CD8-positive, alpha-beta T cell (primary cell): ENCODE measurements at regions of chr1 and their contacts with region 1.

Region 1: DNA sequence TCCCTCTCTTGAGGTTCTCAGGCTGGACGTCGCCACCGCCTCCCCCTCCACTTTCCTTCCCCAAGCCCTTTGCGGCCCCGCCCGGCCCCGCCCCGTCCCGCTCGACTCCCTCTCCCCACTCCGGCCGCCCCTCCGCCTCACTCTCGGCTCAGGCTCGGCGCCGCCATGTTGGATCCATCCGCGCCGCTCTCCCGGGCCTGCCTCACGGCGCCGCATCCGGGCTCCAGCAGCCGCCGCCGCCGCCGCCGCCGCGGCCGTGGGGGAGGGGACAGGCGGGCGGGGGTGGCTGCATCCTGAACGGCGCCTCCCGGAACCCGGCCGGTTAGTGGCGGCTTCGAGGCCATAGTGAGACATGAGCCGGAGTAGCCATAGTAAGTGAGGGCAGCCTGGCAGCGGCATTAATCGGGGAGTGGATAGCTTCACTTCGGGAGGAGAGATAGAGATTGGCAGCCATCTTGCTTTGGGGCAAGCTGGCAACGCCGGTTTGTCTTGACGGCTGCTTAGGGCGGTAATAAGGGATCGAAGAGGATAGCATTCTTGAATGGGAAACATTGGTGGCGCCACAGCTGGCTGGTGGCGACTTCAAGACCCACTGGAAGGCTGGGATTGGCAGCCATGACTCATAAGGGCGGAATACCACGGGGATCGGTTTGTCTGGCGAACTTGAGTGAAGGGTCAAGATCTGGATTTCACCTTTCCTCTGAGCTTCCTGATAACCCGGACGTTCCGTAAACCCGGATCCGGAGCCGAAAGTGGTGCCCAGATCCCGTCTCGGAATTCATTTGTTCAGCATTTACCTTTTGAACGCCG is at the start of gene DEDD:
- DNase-seq: peak; percentile 75 to 97 (median 86)
- ATAC-seq: peak; percentile 93
- H3K4me3 ChIP-seq: peak within 1 kb of the TSS; percentile 66 to 97
- H3K4me3 Mint-ChIP-seq: no peak within 1 kb of the TSS
- H3K27ac ChIP-seq: peak within 1 kb of the TSS; percentile 80 to 87
- H3K27ac Mint-ChIP-seq: no peak within 1 kb of the TSS
- H3K4me1 ChIP-seq: peaks cover 52% of the 10 kb centered on the region
- H3K4me1 Mint-ChIP-seq: peaks cover 49% of the 10 kb centered on the region
- H3K27me3 ChIP-seq: no peaks in the 10 kb centered on the region
- H3K27me3 Mint-ChIP-seq: no peaks in the 10 kb centered on the region
- CTCF ChIP-seq: no peak
- total RNA-seq, gene DEDD: 32.4 to 34.6 TPM

Region 2: GRCh38 chr1:160342953-160343869 is 789.4 kb before region 1 on chr1 and contains the starts of genes COPA and NCSTN:
- CTCF ChIA-PET with region 1: no interaction called
- POLR2A ChIA-PET with region 1: no interaction called
- intact Hi-C with region 1: loop called in 1 of 2 experiments (anchors 5 kb)
- DNase-seq: peak; percentile 82 to 97 (median 89)
- ATAC-seq: peak; percentile 98
- H3K4me3 ChIP-seq: peak within 1 kb of the TSS; percentile 78 to 98
- H3K4me3 Mint-ChIP-seq: peak within 1 kb of the TSS; percentile 100
- H3K27ac ChIP-seq: peak within 1 kb of the TSS; percentile 88 to 97
- H3K27ac Mint-ChIP-seq: peak within 1 kb of the TSS; percentile 100
- H3K4me1 ChIP-seq: peaks cover 12% of the 10 kb centered on the region
- H3K4me1 Mint-ChIP-seq: peaks cover 72% of the 10 kb centered on the region
- H3K27me3 ChIP-seq: no peaks in the 10 kb centered on the region
- H3K27me3 Mint-ChIP-seq: no peaks in the 10 kb centered on the region
- CTCF ChIP-seq: no peak
- total RNA-seq, gene COPA: 116 to 126 TPM
- total RNA-seq, gene NCSTN: 55.6 to 58.4 TPM

Region 3: GRCh38 chr1:161071886-161072371 is 60.7 kb before region 1 on chr1:
- CTCF ChIA-PET with region 1: interaction called, 5 read pairs
- POLR2A ChIA-PET with region 1: interaction called, 6 read pairs
- intact Hi-C with region 1: loop called (anchors 2 to 5 kb)
- DNase-seq: peak; percentile 19 to 75 (median 54)
- ATAC-seq: no peak
- H3K4me3 ChIP-seq: no peak overlapping the region
- H3K4me3 Mint-ChIP-seq: no peak overlapping the region
- H3K27ac ChIP-seq: no peak overlapping the region
- H3K27ac Mint-ChIP-seq: peak overlapping the region; percentile 83
- H3K4me1 ChIP-seq: peaks cover 31% of the 10 kb centered on the region
- H3K4me1 Mint-ChIP-seq: peaks cover 40% of the 10 kb centered on the region
- H3K27me3 ChIP-seq: no peaks in the 10 kb centered on the region
- H3K27me3 Mint-ChIP-seq: no peaks in the 10 kb centered on the region
- CTCF ChIP-seq: peak; percentile 70

Region 4: DNA sequence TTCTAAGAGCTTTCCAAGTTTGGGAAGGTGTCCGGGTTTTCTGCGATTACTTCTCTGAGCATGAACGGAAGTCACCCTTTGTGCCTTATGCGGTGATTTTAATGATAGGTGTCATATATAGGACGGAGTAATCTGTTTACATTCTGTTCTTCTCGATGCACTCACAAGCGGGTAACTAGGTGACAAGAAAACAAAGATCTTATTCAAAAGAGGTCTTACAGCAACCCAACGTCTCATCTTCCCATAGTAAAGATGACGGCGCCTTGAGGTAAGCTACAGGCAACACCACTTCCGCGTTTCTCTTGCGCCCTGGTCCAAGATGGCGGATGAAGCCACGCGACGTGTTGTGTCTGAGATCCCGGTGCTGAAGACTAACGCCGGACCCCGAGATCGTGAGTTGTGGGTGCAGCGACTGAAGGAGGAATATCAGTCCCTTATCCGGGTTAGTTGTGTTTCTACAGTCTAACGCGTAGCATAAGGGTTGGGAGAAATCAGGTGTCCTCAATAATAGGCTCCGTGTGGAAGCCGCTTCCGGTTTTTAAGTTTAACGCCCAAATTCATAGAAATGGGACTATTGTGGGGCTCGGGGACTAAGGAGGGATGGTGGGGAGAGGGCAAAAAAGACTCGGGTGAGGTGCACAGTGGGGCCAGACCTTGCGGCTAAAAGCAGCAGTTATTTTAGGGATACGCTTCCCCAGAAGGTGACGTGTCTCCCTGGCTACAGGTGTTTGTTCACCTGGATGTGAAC is 21.2 kb after region 1 on chr1 and contains the start of gene UFC1:
- CTCF ChIA-PET with region 1: interaction called, 8 read pairs
- POLR2A ChIA-PET with region 1: interaction called, 20 read pairs
- intact Hi-C with region 1: loop called (anchors 1 kb)
- DNase-seq: peak; percentile 66 to 96 (median 78)
- ATAC-seq: peak; percentile 92
- H3K4me3 ChIP-seq: peak within 1 kb of the TSS; percentile 95 to 98
- H3K4me3 Mint-ChIP-seq: peak within 1 kb of the TSS; percentile 96
- H3K27ac ChIP-seq: peak within 1 kb of the TSS; percentile 98 to 99
- H3K27ac Mint-ChIP-seq: peak within 1 kb of the TSS; percentile 100
- H3K4me1 ChIP-seq: peaks cover 17% of the 10 kb centered on the region
- H3K4me1 Mint-ChIP-seq: peaks cover 30% of the 10 kb centered on the region
- H3K27me3 ChIP-seq: no peaks in the 10 kb centered on the region
- H3K27me3 Mint-ChIP-seq: no peaks in the 10 kb centered on the region
- CTCF ChIP-seq: no peak
- total RNA-seq, gene UFC1: 94.7 to 96.6 TPM

Region 5: GRCh38 chr1:161165742-161166668 is 33.4 kb after region 1 on chr1 and contains the start of gene PPOX:
- CTCF ChIA-PET with region 1: interaction called, 3 read pairs
- POLR2A ChIA-PET with region 1: interaction called, 10 read pairs
- intact Hi-C with region 1: loop called (anchors 1 kb)
- DNase-seq: peak; percentile 81 to 97 (median 92)
- ATAC-seq: peak; percentile 91
- H3K4me3 ChIP-seq: peak within 1 kb of the TSS; percentile 58 to 79
- H3K4me3 Mint-ChIP-seq: peak within 1 kb of the TSS; percentile 88
- H3K27ac ChIP-seq: peak within 1 kb of the TSS; percentile 88 to 91
- H3K27ac Mint-ChIP-seq: peak within 1 kb of the TSS; percentile 98
- H3K4me1 ChIP-seq: peaks cover 29% of the 10 kb centered on the region
- H3K4me1 Mint-ChIP-seq: peaks cover 56% of the 10 kb centered on the region
- H3K27me3 ChIP-seq: no peaks in the 10 kb centered on the region
- H3K27me3 Mint-ChIP-seq: no peaks in the 10 kb centered on the region
- CTCF ChIP-seq: peak; percentile 52
- total RNA-seq, gene PPOX: 18.5 to 19.8 TPM

Region 6: GRCh38 chr1:161201828-161202725 is 69.5 kb after region 1 on chr1 and contains the start of gene NDUFS2:
- CTCF ChIA-PET with region 1: no interaction called
- POLR2A ChIA-PET with region 1: interaction called, 5 read pairs
- intact Hi-C with region 1: loop called in 1 of 2 experiments (anchors 1 kb)
- DNase-seq: peak; percentile 90 to 99 (median 95)
- ATAC-seq: peak; percentile 98
- H3K4me3 ChIP-seq: peak within 1 kb of the TSS; percentile 84 to 93
- H3K4me3 Mint-ChIP-seq: peak within 1 kb of the TSS; percentile 95
- H3K27ac ChIP-seq: peak within 1 kb of the TSS; percentile 87
- H3K27ac Mint-ChIP-seq: peak within 1 kb of the TSS; percentile 98
- H3K4me1 ChIP-seq: peaks cover 58% of the 10 kb centered on the region
- H3K4me1 Mint-ChIP-seq: peaks cover 69% of the 10 kb centered on the region
- H3K27me3 ChIP-seq: no peaks in the 10 kb centered on the region
- H3K27me3 Mint-ChIP-seq: no peaks in the 10 kb centered on the region
- CTCF ChIP-seq: no peak
- total RNA-seq, gene NDUFS2: 53.0 to 63.4 TPM